CD8-positive, alpha-beta T cell (primary cell): ENCODE measurements at regions of chr13 and their contacts with region 1.

Region 1: GRCh38 chr13:49641801-49642291 is 13.5 kb downstream of the ARL11 start:
- DNase-seq: peak in 1 of 9 experiments; percentile 22
- ATAC-seq: no peak
- H3K4me3 ChIP-seq: no peak overlapping the region
- H3K4me3 Mint-ChIP-seq: no peak overlapping the region
- H3K27ac ChIP-seq: no peak overlapping the region
- H3K27ac Mint-ChIP-seq: no peak overlapping the region
- H3K4me1 ChIP-seq: peaks cover 4% of the 10 kb centered on the region
- H3K4me1 Mint-ChIP-seq: peaks cover 13% of the 10 kb centered on the region
- H3K27me3 ChIP-seq: no peaks in the 10 kb centered on the region
- H3K27me3 Mint-ChIP-seq: no peaks in the 10 kb centered on the region
- CTCF ChIP-seq: no peak

Region 2: DNA sequence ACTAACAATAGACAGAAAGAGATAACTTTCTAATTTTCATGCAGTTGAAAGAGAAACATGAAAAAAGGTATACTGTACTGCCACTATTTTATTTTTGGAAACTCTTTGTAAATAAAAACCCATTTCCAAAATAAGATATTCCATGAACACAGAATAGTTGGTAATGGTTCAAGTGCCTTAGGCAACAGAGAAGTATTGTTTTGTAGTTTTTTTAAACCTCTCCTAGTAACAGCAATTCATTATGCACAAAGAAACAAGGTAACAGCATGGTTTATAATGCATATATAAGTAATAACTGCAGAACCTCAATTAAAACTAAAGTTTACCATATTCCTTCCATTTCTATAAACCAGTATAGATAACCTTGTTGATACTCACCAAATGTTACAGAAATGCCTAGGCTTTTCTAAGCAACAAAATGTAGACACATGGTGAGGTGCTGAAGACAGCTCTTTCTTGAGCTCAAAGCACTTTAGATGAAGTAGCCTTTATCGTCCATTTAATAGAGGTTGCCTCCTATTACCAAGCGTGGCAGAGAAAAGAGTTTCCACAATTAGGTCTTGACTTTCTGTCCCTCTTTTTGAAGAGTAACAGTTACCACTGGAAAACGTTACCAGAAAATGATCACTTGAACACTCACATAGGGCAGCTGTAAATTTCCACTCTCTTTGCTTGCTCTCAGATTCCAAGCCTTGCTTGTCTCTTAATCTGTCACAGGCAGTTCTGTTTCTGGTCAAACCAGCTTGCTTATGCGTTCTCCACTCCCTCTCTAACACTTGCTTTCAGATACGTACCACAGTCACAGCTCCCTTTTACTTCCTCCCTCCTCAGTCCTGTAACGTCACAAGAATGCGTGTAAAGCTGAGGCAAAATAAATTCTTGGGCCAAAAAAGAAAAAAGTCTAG is 240.8 kb before region 1 on chr13:
- CTCF ChIA-PET with region 1: no interaction called
- POLR2A ChIA-PET with region 1: no interaction called
- intact Hi-C with region 1: no loop called
- DNase-seq: peak in 1 of 9 experiments; percentile 1
- ATAC-seq: no peak
- H3K4me3 ChIP-seq: no peak overlapping the region
- H3K4me3 Mint-ChIP-seq: no peak overlapping the region
- H3K27ac ChIP-seq: no peak overlapping the region
- H3K27ac Mint-ChIP-seq: no peak overlapping the region
- H3K4me1 ChIP-seq: no peaks in the 10 kb centered on the region
- H3K4me1 Mint-ChIP-seq: peaks cover 2% of the 10 kb centered on the region
- H3K27me3 ChIP-seq: no peaks in the 10 kb centered on the region
- H3K27me3 Mint-ChIP-seq: no peaks in the 10 kb centered on the region
- CTCF ChIP-seq: no peak

Region 3: DNA sequence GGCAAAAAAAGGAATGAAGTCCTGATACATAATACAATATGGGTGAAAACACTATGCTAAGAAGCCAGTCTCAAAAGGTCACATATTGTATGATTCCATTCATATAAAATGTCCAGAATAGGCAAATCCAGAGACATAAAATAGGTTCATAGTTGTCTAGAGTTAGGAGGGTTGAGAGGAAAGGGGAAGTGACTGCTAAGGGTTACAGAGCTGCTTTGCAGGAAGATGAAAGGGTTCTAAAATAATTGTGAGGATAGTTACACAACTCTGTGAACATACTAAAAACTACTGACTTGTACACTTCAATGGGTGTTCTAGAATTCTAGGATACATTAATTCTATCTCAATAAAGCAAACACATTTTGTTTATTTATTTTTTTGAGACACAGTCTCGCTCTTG is 223.6 kb before region 1 on chr13:
- CTCF ChIA-PET with region 1: no interaction called
- POLR2A ChIA-PET with region 1: no interaction called
- intact Hi-C with region 1: no loop called
- DNase-seq: no peak
- ATAC-seq: no peak
- H3K4me3 ChIP-seq: no peak overlapping the region
- H3K4me3 Mint-ChIP-seq: no peak overlapping the region
- H3K27ac ChIP-seq: no peak overlapping the region
- H3K27ac Mint-ChIP-seq: no peak overlapping the region
- H3K4me1 ChIP-seq: no peaks in the 10 kb centered on the region
- H3K4me1 Mint-ChIP-seq: no peaks in the 10 kb centered on the region
- H3K27me3 ChIP-seq: no peaks in the 10 kb centered on the region
- H3K27me3 Mint-ChIP-seq: no peaks in the 10 kb centered on the region
- CTCF ChIP-seq: no peak

Region 4: GRCh38 chr13:49585220-49586157 is 56.4 kb before region 1 on chr13 and contains the start of gene RCBTB1:
- CTCF ChIA-PET with region 1: no interaction called
- POLR2A ChIA-PET with region 1: no interaction called
- intact Hi-C with region 1: no loop called
- DNase-seq: peak; percentile 33 to 88 (median 68)
- ATAC-seq: peak; percentile 88
- H3K4me3 ChIP-seq: peak within 1 kb of the TSS; percentile 89 to 97
- H3K4me3 Mint-ChIP-seq: peak within 1 kb of the TSS; percentile 90
- H3K27ac ChIP-seq: peak within 1 kb of the TSS; percentile 71 to 86
- H3K27ac Mint-ChIP-seq: peak within 1 kb of the TSS; percentile 92
- H3K4me1 ChIP-seq: peaks cover 9% of the 10 kb centered on the region
- H3K4me1 Mint-ChIP-seq: peaks cover 36% of the 10 kb centered on the region
- H3K27me3 ChIP-seq: no peaks in the 10 kb centered on the region
- H3K27me3 Mint-ChIP-seq: no peaks in the 10 kb centered on the region
- CTCF ChIP-seq: no peak
- total RNA-seq, gene RCBTB1: 12.1 to 14.2 TPM

Region 5: GRCh38 chr13:51249770-51250741 is 1608.2 kb after region 1 on chr13:
- CTCF ChIA-PET with region 1: no interaction called
- POLR2A ChIA-PET with region 1: no interaction called
- intact Hi-C with region 1: loop called in 1 of 2 experiments (anchors 5 kb)
- DNase-seq: no peak
- ATAC-seq: no peak
- H3K4me3 ChIP-seq: no peak overlapping the region
- H3K4me3 Mint-ChIP-seq: no peak overlapping the region
- H3K27ac ChIP-seq: no peak overlapping the region
- H3K27ac Mint-ChIP-seq: no peak overlapping the region
- H3K4me1 ChIP-seq: no peaks in the 10 kb centered on the region
- H3K4me1 Mint-ChIP-seq: peaks cover 2% of the 10 kb centered on the region
- H3K27me3 ChIP-seq: no peaks in the 10 kb centered on the region
- H3K27me3 Mint-ChIP-seq: no peaks in the 10 kb centered on the region
- CTCF ChIP-seq: no peak